HepG2 (cell line): ENCODE measurements at regions of chr15 and their contacts with region 1.

Region 1: GRCh38 chr15:88834211-88834812 is 31.1 kb downstream of the ACAN start:
- DNase-seq: no peak
- ATAC-seq: peak; percentile 83
- H3K4me3 ChIP-seq: no peak overlapping the region
- H3K27ac ChIP-seq: no peak overlapping the region
- H3K4me1 ChIP-seq: no peaks in the 10 kb centered on the region
- H3K27me3 ChIP-seq: peaks cover 0 to 9% of the 10 kb centered on the region in 2 experiments; a peak in 2 of 5 replicates
- CTCF ChIP-seq: peak; percentile 86
- EP300 ChIP-seq: no peak
- POLR2A ChIP-seq: no peak
- RAD21 ChIP-seq: peak; percentile 75

Region 2: DNA sequence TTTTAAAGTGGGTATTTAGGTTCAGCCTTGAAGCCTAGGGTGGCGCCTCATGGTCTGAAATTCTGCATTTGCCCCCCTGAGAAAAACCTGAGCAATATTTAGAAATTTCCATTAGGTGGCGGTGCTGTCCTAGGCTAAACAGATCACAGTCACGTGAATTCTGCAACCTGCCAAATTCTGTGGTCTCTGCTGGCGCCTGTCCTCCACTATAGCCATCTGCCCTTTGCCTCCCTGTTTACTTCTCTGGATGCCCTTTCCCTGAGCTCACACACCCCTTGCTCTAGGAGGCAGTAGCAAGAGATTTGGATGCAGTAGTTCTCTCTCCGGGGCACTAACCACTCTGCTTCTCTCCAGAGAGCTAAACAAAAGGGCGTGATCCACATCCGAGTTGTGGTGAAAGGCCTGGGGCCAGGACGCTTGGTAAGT is 357.7 kb before region 1 on chr15:
- CTCF ChIA-PET with region 1: no interaction called
- POLR2A ChIA-PET with region 1: no interaction called
- in situ Hi-C with region 1: loop called (anchors 10 kb)
- intact Hi-C with region 1: no loop called
- DNase-seq: peak; percentile 18
- ATAC-seq: peak; percentile 62
- H3K4me3 ChIP-seq: no peak overlapping the region
- H3K27ac ChIP-seq: no peak overlapping the region
- H3K4me1 ChIP-seq: no peaks in the 10 kb centered on the region
- H3K27me3 ChIP-seq: no peaks in the 10 kb centered on the region
- CTCF ChIP-seq: peak; percentile 63
- EP300 ChIP-seq: no peak
- POLR2A ChIP-seq: no peak
- RAD21 ChIP-seq: peak; percentile 46; the same call in 1 of the 2 replicates

Region 3: DNA sequence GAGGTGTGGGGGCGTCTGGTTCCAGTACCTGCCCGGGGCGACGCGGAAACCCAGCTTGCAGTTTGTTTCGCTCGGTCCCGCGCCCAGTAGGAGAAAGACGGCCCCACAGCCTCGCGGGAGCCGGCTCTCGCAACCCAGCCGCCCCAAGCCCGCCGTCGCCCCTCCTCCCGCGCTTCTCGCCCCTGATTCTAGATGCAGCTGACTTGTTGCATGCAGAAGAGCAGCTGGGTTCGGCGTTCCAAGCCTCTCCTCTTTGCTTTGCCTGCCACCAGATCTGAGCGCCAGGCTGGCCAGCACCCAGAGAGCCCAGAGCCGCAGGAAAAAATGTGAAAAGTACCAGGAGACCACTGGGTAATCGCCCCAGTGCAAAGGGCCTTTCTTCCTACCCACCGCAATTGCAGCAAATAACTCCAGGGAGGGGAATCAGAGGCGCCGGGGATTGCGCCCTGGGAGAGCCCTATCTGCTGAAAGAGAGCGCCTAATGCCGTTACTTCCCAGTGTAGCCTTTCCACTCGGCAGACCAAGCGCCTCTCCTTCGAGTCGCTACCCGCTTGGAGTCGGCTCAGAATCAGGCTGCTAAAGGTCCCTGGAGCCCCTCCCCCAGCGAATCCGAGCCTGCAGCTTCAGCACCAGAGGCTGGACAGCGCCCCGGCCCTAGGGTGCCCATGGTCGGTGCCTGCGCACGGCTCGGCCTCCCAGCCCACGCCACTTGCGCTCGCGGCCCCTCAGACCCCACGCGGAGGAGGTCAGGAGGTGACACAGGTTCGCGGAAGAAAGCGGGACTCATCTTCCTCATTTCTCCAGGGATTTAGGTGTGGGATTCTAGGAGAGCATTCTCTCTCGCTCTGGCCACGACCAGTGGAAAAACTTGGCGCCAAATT is 228.9 kb before region 1 on chr15:
- CTCF ChIA-PET with region 1: no interaction called
- POLR2A ChIA-PET with region 1: no interaction called
- in situ Hi-C with region 1: no loop called
- intact Hi-C with region 1: no loop called
- DNase-seq: no peak
- ATAC-seq: peak; percentile 84
- H3K4me3 ChIP-seq: no peak overlapping the region
- H3K27ac ChIP-seq: no peak overlapping the region
- H3K4me1 ChIP-seq: no peaks in the 10 kb centered on the region
- H3K27me3 ChIP-seq: peaks cover 6 to 37% of the 10 kb centered on the region in 2 experiments; a peak in 3 of 5 replicates
- CTCF ChIP-seq: no peak
- EP300 ChIP-seq: no peak
- POLR2A ChIP-seq: no peak
- RAD21 ChIP-seq: no peak

Region 4: DNA sequence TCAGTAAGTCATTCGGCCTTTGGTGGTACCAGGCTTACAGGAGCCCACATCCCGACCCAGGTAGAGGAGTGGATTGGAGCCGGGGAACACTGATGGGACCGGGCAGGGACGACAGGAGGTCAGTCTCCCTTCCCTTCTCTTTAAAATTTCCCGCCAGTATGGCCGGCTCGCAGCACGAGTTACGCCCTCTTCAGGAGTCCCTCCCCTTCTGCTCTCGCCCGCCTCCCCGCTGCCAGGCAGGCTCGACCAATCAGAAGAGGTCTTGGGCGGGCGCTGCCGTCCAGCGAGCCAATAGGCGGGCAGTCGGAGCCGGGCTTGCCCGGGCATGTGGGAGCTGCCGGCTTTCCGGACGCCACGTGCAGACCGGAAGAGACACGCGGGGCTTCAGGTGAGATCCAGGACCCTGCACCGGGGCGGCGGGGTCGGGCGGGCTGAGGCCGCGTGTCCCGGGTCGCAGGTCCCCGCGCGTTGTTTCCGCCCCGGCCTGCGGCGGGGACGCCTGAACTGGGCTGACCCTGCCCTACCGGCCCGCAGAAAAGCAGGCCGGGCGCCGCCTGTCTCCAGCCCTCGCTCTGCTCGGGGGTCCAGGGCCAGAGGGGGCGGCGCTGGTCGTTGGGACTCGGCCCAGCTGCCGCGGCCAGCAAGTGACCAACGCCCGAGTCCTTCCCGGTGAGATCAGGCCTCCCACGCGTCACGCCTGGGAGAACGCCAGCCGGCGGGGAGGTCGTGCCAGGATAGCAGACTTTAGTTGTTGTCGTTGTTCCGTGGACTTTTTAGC is 213.1 kb before region 1 on chr15 and contains the start of gene AEN:
- CTCF ChIA-PET with region 1: interaction called, 3 read pairs
- POLR2A ChIA-PET with region 1: no interaction called
- in situ Hi-C with region 1: no loop called
- intact Hi-C with region 1: loop called (anchors 10 kb)
- DNase-seq: peak; percentile 92
- ATAC-seq: peak; percentile 92
- H3K4me3 ChIP-seq: peak within 1 kb of the TSS; percentile 87 to 96 (median 94)
- H3K27ac ChIP-seq: peak within 1 kb of the TSS; percentile 93
- H3K4me1 ChIP-seq: peaks cover 46% of the 10 kb centered on the region
- H3K27me3 ChIP-seq: no peaks in the 10 kb centered on the region
- CTCF ChIP-seq: peak; percentile 26; the same call in 1 of the 2 replicates
- EP300 ChIP-seq: no peak
- POLR2A ChIP-seq: peak; percentile 76 to 81
- RAD21 ChIP-seq: peak; percentile 42
- total RNA-seq, gene AEN: 115 and 118 TPM in 2 replicates

Region 5: DNA sequence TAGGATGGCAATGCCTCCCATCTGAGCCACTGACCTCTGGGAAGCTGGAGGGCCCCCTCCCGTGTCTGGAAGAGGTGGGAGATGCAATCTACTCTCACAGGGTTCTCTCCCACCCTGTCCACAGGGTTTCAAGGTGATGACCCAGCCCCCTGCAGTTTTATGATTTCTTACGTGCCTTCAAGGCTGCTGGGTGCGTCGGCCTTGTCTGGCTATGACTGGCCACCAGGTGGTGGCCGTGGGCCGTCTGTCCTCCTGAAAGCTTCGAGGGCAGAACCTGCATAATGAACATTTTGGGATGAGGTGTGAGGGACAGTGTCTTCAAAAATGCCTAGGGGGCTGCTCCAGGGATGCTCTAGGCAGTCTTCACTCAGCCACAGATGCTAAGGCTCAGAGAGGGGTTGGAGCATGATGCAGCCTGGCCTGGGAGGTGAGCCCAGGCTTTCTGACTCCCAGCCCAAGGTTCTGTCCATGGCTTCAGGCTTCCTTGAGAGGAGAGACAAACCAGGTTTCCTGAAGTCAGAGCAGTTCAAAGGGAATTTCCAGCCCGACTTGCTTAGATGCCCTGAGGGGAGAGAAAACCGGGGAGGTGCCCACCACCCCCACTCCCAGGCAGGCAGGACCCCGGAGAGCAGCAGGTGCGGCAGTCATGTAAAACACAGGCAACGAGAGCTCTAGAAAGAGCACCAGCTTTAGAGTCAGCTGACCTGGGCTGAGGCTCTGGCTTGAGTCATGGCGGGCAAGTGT is 176.8 kb before region 1 on chr15:
- CTCF ChIA-PET with region 1: interaction called, 6 read pairs
- POLR2A ChIA-PET with region 1: no interaction called
- in situ Hi-C with region 1: loop called (anchors 5 kb)
- intact Hi-C with region 1: loop called (anchors 1 kb)
- DNase-seq: no peak
- ATAC-seq: peak; percentile 83
- H3K4me3 ChIP-seq: no peak overlapping the region
- H3K27ac ChIP-seq: no peak overlapping the region
- H3K4me1 ChIP-seq: no peaks in the 10 kb centered on the region
- H3K27me3 ChIP-seq: peaks cover 0 to 13% of the 10 kb centered on the region in 2 experiments; a peak in 4 of 5 replicates
- CTCF ChIP-seq: peak; percentile 87
- EP300 ChIP-seq: no peak
- POLR2A ChIP-seq: no peak
- RAD21 ChIP-seq: peak; percentile 80

Region 6: DNA sequence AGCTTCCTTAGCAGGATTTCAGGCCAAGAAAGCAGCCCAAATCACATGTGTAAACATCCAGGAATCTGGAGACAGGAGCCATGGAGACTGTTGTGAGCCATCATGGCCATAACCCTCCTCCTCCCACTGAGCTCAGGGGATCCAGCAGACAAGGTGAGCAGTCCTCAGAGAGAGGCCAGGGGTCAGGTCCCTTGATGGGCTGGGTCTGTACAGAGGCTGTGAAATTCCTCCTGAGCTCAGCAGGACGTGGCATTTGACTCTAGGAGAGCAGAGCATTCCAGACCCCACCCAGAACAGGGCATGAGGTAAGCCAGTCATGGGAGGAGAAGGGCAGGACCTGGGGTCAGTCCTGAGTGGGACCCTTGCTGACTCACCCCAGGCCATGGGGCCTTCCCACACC is 98.1 kb before region 1 on chr15:
- CTCF ChIA-PET with region 1: no interaction called
- POLR2A ChIA-PET with region 1: no interaction called
- in situ Hi-C with region 1: no loop called
- intact Hi-C with region 1: no loop called
- DNase-seq: no peak
- ATAC-seq: no peak
- H3K4me3 ChIP-seq: no peak overlapping the region
- H3K27ac ChIP-seq: no peak overlapping the region
- H3K4me1 ChIP-seq: no peaks in the 10 kb centered on the region
- H3K27me3 ChIP-seq: peaks cover 0 to 13% of the 10 kb centered on the region in 2 experiments; a peak in 2 of 5 replicates
- CTCF ChIP-seq: no peak
- EP300 ChIP-seq: no peak
- POLR2A ChIP-seq: no peak
- RAD21 ChIP-seq: no peak

Region 7: GRCh38 chr15:88800026-88800425 is 34.3 kb before region 1 on chr15:
- CTCF ChIA-PET with region 1: no interaction called
- POLR2A ChIA-PET with region 1: no interaction called
- in situ Hi-C with region 1: no loop called
- intact Hi-C with region 1: no loop called
- DNase-seq: no peak
- ATAC-seq: no peak
- H3K4me3 ChIP-seq: no peak overlapping the region
- H3K27ac ChIP-seq: no peak overlapping the region
- H3K4me1 ChIP-seq: no peaks in the 10 kb centered on the region
- H3K27me3 ChIP-seq: peaks cover 2 to 49% of the 10 kb centered on the region in 2 experiments; a peak in 3 of 5 replicates
- CTCF ChIP-seq: no peak
- EP300 ChIP-seq: no peak
- POLR2A ChIP-seq: no peak
- RAD21 ChIP-seq: no peak